Gastrocnemius medialis (tissue), 4 donors: ENCODE measurements at regions of chr11 and their contacts with region 1.

Region 1: DNA sequence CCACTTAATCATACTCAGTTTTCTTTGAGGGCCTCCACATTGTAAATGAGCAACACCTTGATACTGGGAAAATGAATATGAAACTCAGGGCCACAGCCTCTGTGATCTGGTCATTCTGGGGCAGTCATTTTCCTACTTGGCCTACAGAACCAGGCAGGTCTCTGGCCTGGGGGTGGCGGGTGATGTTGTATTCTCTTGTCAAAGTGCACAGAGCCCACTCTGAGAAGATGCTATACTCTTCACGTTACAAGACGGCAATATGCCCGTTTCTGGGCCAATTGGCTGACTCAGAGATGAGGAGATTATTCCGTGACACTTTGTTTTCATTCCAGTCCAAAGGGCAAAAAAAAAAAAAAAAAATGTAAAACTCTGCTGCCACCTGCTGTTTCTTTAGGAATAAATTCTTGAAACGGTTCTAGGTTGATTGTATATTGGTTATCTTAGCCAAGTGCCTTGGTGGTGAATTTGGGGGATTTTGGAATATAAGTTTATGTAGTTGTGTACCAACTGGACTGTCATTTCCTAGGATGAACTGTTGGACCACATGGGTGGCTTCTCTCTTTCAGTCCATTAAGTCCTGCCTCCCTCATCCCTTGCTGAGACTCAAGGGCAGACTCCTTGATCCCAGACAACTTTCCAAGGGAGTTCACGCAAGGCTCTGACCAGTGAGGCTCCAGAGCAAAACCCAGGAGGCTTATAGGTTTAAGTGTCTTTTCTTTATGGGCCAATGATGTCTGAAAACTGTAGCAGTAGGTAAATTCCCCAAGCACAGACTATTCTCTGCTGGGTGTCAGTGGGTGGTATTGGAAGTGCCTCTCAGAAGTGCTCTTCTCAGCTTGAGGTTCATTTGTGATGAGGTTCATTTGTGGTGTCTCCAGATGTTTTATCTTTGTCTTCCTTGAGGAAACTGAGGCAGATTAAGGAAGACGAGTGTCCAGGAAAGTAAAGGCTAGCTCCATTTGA is 18.2 kb downstream of the ADM start:
- DNase-seq: peak; percentile 37 to 49
- ATAC-seq: peak; percentile 74 to 80
- H3K4me3 ChIP-seq: no peak overlapping the region
- H3K27ac ChIP-seq: peak overlapping the region; percentile 56 to 75 (median 68)
- H3K4me1 ChIP-seq: peaks cover 22 to 36% of the 10 kb centered on the region in 2 donors
- H3K27me3 ChIP-seq: no peaks in the 10 kb centered on the region
- CTCF ChIP-seq: peak; percentile 54 to 64 (median 63)
- POLR2A ChIP-seq: no peak

Region 2: GRCh38 chr11:9861860-9862725 is 461.0 kb before region 1 on chr11:
- in situ Hi-C with region 1: loop called (anchors 10 to 25 kb)
- intact Hi-C with region 1: loop called (anchors 1 kb)
- DNase-seq: peak; percentile 6 to 36
- ATAC-seq: peak; percentile 75 to 87
- H3K4me3 ChIP-seq: no peak overlapping the region
- H3K27ac ChIP-seq: no peak overlapping the region
- H3K4me1 ChIP-seq: no peaks in the 10 kb centered on the region
- H3K27me3 ChIP-seq: no peaks in the 10 kb centered on the region
- CTCF ChIP-seq: peak; percentile 50 to 74 (median 57)
- POLR2A ChIP-seq: no peak

Region 3: DNA sequence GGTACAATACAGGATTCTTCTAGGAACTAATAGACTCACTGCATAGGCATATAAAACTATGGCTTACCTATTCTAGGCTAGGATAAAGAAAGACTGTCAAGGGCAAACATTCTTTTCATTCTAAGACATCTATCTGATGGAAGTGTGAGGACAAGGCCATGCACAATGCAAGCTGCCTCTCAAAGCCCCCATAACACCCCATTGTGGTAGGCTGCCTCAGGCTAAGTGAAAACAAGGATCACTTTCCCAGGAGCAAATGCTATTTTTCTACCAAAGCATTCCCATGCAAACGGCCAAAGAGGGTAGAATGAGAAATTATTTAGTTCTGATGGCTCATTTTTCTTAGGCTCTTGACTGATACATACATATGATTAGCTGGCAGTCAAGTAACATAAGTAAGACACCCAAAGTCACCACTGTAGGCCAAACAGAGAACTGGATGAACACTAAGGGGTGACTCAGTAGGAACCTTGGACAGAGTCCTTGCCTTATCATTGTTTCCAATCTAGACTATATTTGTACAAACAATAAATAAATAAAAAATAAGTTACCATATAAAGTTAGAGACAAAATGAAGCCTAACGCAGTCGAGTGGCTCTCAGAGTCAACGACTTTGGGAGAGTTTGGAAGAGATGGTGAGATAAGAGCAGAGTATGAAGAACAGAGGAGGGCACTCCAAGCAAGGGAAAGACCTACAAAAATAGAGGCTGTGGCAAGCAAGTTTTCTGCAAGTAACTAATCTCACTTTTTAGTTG is 332.7 kb before region 1 on chr11:
- in situ Hi-C with region 1: loop called in 3 of 4 experiments (anchors 25 kb)
- intact Hi-C with region 1: loop called (anchors 5 kb)
- DNase-seq: no peak
- ATAC-seq: peak; percentile 44 to 47
- H3K4me3 ChIP-seq: no peak overlapping the region
- H3K27ac ChIP-seq: no peak overlapping the region
- H3K4me1 ChIP-seq: no peaks in the 10 kb centered on the region
- H3K27me3 ChIP-seq: no peaks in the 10 kb centered on the region
- CTCF ChIP-seq: no peak
- POLR2A ChIP-seq: no peak

Region 4: GRCh38 chr11:10192036-10192435 is 131.1 kb before region 1 on chr11:
- in situ Hi-C with region 1: no loop called
- intact Hi-C with region 1: no loop called
- DNase-seq: no peak
- ATAC-seq: no peak
- H3K4me3 ChIP-seq: no peak overlapping the region
- H3K27ac ChIP-seq: no peak overlapping the region
- H3K4me1 ChIP-seq: no peaks in the 10 kb centered on the region
- H3K27me3 ChIP-seq: no peaks in the 10 kb centered on the region
- CTCF ChIP-seq: no peak
- POLR2A ChIP-seq: no peak

Region 5: DNA sequence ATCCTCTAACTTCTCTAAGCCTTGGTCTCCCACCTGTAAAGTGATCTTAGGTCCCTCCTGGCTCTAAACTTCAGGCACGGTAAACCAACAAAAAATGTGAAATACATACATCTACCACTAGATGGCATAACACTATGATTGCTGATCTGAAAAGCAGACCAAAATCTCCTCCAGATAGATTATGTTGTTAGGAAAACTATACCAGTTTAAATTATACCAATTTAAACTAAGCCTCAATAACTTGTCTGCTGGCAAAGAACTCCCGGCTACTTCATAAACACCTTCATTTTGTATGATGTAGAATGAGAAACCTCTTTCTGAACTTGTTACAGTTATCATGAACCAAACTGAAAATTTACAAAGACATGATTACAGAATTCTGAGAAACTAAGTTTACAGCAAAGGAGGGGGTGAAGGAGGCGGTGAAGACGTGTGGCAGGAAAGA is 115.0 kb before region 1 on chr11:
- in situ Hi-C with region 1: loop called (anchors 5 to 25 kb)
- intact Hi-C with region 1: loop called (anchors 5 kb)
- DNase-seq: no peak
- ATAC-seq: peak; percentile 61 to 87
- H3K4me3 ChIP-seq: no peak overlapping the region
- H3K27ac ChIP-seq: peak overlapping the region in 1 of 4 donors; percentile 9
- H3K4me1 ChIP-seq: peaks cover 0 to 7% of the 10 kb centered on the region in 2 donors
- H3K27me3 ChIP-seq: no peaks in the 10 kb centered on the region
- CTCF ChIP-seq: peak; percentile 68 to 80 (median 79)
- POLR2A ChIP-seq: no peak

Region 6: GRCh38 chr11:10366568-10367370 is 43.7 kb after region 1 on chr11:
- in situ Hi-C with region 1: loop called in 1 of 4 experiments (anchors 10 kb)
- intact Hi-C with region 1: loop called (anchors 2 kb)
- DNase-seq: peak; percentile 72 to 84
- ATAC-seq: peak; percentile 93 to 94
- H3K4me3 ChIP-seq: peak overlapping the region in 1 of 4 donors; percentile 11
- H3K27ac ChIP-seq: peak overlapping the region; percentile 64 to 83 (median 69)
- H3K4me1 ChIP-seq: peaks cover 11 to 21% of the 10 kb centered on the region in 2 donors
- H3K27me3 ChIP-seq: no peaks in the 10 kb centered on the region
- CTCF ChIP-seq: peak; percentile 60 to 91 (median 83)
- POLR2A ChIP-seq: no peak

Region 7: DNA sequence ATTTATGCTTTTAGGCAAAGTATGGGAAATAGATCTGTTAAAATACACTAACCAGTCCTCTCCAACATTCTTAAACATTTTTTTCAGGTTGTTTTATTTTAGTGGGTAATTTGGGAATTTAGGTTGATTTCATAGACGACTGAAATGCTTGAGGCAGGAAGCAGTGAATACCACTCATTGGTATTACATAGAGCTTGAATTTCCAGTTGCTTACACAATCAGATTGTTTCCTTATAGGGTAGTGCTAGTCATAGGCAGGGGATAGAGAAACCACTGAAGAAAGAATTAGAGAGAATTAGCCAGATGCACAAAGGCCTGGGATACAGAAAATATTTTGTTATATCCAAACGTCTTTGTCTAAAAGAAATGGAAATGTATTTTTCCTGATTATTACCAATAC is 269.2 kb after region 1 on chr11:
- in situ Hi-C with region 1: no loop called
- intact Hi-C with region 1: no loop called
- DNase-seq: no peak
- ATAC-seq: peak; percentile 74 to 89
- H3K4me3 ChIP-seq: no peak overlapping the region
- H3K27ac ChIP-seq: peak overlapping the region in 2 of 4 donors; percentile 2 to 16
- H3K4me1 ChIP-seq: peaks cover 0 to 5% of the 10 kb centered on the region in 2 donors
- H3K27me3 ChIP-seq: no peaks in the 10 kb centered on the region
- CTCF ChIP-seq: no peak
- POLR2A ChIP-seq: no peak